Activated CD8-positive, alpha-beta memory T cell treated with anti-CD3 and anti-CD28 coated beads, Interleukin-2, amount 10 ng/mL, durations not matched to agents 7 days and 5 days (primary cell): ENCODE measurements at regions of chr5 and their contacts with region 1.

Region 1: GRCh38 chr5:17189381-17190036 is 27.9 kb upstream of the BASP1 start:
- DNase-seq: peak; percentile 63
- ATAC-seq: no peak
- H3K4me3 Mint-ChIP-seq: no peak overlapping the region
- H3K27ac Mint-ChIP-seq: no peak overlapping the region
- H3K4me1 Mint-ChIP-seq: no peaks in the 10 kb centered on the region
- H3K27me3 Mint-ChIP-seq: no peaks in the 10 kb centered on the region

Region 2: DNA sequence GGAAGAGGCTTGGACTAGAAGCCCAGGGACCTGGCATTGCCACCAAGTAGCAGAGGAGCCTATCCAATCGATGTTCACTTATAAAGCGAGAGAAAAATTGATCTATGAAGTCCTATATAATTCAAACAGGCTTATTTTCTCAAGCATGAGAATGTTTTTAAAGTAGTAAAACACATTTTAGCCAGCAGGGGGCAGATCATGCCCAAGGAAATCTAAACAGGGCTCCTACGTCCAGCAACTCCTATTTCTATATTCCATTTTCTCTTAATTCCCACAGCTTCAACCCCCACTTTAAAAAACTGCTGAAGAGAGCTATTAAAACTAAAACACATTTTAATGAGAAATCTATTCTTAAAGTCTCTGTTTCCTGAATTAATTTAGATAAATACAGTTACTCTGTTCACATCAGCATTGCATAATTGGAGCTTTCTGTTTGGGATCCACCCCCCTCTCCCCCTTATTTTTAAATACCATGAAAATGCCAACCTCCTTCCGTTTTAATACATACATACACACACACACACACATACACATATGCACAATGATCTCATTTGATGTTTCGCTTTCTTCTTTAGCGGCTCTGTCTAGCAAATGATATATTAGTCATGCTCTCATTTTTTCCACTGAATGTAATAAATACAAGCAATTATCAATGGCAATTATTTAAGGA is 398.3 kb before region 1 on chr5:
- CTCF ChIA-PET with region 1: interaction called, 12 read pairs
- DNase-seq: no peak
- ATAC-seq: no peak
- H3K4me3 Mint-ChIP-seq: no peak overlapping the region
- H3K27ac Mint-ChIP-seq: no peak overlapping the region
- H3K4me1 Mint-ChIP-seq: peaks cover 2% of the 10 kb centered on the region
- H3K27me3 Mint-ChIP-seq: peaks cover 3% of the 10 kb centered on the region

Region 3: GRCh38 chr5:17069995-17070511 is 119.5 kb before region 1 on chr5:
- CTCF ChIA-PET with region 1: no interaction called
- DNase-seq: no peak
- ATAC-seq: no peak
- H3K4me3 Mint-ChIP-seq: no peak overlapping the region
- H3K27ac Mint-ChIP-seq: no peak overlapping the region
- H3K4me1 Mint-ChIP-seq: no peaks in the 10 kb centered on the region
- H3K27me3 Mint-ChIP-seq: no peaks in the 10 kb centered on the region